ENCODE measurements at regions of chr11 and their contacts with region 1.

Region 1: GRCh38 chr11:70467201-70468085 is 69.1 kb downstream of the CTTN start:
- DNase-seq: peak; percentile 86
- ATAC-seq: peak; percentile 57

Region 2: GRCh38 chr11:68528630-68529029 is 1938.8 kb before region 1 on chr11:
- intact Hi-C with region 1: no loop called
- DNase-seq: no peak
- ATAC-seq: no peak

Region 3: GRCh38 chr11:70503458-70504221 is 36.2 kb after region 1 on chr11:
- intact Hi-C with region 1: no loop called
- DNase-seq: no peak
- ATAC-seq: no peak

Region 4: GRCh38 chr11:70755410-70756161 is 288.1 kb after region 1 on chr11:
- intact Hi-C with region 1: loop called (anchors 2 kb)
- DNase-seq: peak; percentile 86
- ATAC-seq: peak; percentile 98